ENCODE measurements at regions of chr17 and their contacts with region 1.

Region 1: GRCh38 chr17:55527540-55528118 is 16.4 kb upstream of the SMIM36 start:
- DNase-seq: no peak
- H3K4me3 Mint-ChIP-seq: no peak overlapping the region
- H3K27ac Mint-ChIP-seq: no peak overlapping the region
- H3K4me1 Mint-ChIP-seq: peaks cover 5% of the 10 kb centered on the region
- H3K27me3 Mint-ChIP-seq: peaks cover 20% of the 10 kb centered on the region

Region 2: GRCh38 chr17:55601874-55602364 is 74.3 kb after region 1 on chr17:
- intact Hi-C with region 1: loop called (anchors 1 kb)
- DNase-seq: peak; percentile 75
- H3K4me3 Mint-ChIP-seq: no peak overlapping the region
- H3K27ac Mint-ChIP-seq: no peak overlapping the region
- H3K4me1 Mint-ChIP-seq: no peaks in the 10 kb centered on the region
- H3K27me3 Mint-ChIP-seq: peaks cover 3% of the 10 kb centered on the region

Region 3: DNA sequence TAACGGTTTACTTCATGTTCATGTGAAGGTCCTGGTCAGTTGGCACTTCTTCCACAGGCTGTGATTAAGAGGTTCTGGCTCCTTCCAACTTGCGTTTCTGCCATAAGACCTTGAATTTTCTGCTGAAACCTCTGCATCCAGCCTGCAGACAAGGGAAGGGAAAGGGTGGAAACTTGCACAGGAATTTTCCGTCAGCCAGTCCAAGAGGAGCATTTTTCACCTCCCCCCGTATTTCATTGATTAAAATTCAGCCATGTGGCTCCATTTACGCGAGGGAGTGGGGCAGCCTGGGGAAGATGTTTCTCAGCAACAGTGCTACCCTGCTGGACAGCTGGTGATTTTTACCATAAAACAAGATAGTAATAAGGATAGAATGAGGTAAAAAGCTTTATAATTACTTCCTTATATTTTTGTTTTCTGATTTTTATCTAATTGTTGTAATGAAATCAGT is 85.1 kb after region 1 on chr17:
- intact Hi-C with region 1: no loop called
- DNase-seq: no peak
- H3K4me3 Mint-ChIP-seq: no peak overlapping the region
- H3K27ac Mint-ChIP-seq: no peak overlapping the region
- H3K4me1 Mint-ChIP-seq: no peaks in the 10 kb centered on the region
- H3K27me3 Mint-ChIP-seq: peaks cover 12% of the 10 kb centered on the region

Region 4: DNA sequence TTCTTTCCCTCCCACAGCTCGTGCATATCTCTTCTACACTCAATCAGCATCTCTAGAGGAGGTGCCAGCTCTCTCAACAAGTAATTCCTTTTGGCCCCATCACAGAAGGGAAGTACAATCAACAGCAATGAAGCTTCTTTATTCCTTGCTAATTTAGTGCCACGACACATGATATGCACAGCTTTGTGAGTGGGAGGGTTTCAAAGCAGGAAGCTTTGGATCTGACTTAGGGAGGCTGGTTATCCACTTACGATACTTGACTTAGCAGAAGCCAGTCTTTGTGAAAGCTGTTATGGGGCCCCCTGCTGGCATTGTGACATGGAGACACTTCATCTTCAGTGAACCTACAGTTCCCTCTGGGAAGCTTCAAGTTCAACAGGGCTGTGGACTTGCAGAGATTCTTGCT is 114.0 kb after region 1 on chr17:
- intact Hi-C with region 1: loop called (anchors 1 kb)
- DNase-seq: peak; percentile 70
- H3K4me3 Mint-ChIP-seq: no peak overlapping the region
- H3K27ac Mint-ChIP-seq: no peak overlapping the region
- H3K4me1 Mint-ChIP-seq: no peaks in the 10 kb centered on the region
- H3K27me3 Mint-ChIP-seq: peaks cover 4% of the 10 kb centered on the region

Region 5: GRCh38 chr17:55717898-55718735 is 190.5 kb after region 1 on chr17:
- intact Hi-C with region 1: loop called (anchors 1 kb)
- DNase-seq: peak; percentile 87
- H3K4me3 Mint-ChIP-seq: no peak overlapping the region
- H3K27ac Mint-ChIP-seq: no peak overlapping the region
- H3K4me1 Mint-ChIP-seq: no peaks in the 10 kb centered on the region
- H3K27me3 Mint-ChIP-seq: peaks cover 23% of the 10 kb centered on the region

Region 6: GRCh38 chr17:55735731-55736405 is 208.2 kb after region 1 on chr17:
- intact Hi-C with region 1: loop called (anchors 1 kb)
- DNase-seq: peak; percentile 81
- H3K4me3 Mint-ChIP-seq: no peak overlapping the region
- H3K27ac Mint-ChIP-seq: no peak overlapping the region
- H3K4me1 Mint-ChIP-seq: peaks cover 18% of the 10 kb centered on the region
- H3K27me3 Mint-ChIP-seq: peaks cover 31% of the 10 kb centered on the region

Region 7: DNA sequence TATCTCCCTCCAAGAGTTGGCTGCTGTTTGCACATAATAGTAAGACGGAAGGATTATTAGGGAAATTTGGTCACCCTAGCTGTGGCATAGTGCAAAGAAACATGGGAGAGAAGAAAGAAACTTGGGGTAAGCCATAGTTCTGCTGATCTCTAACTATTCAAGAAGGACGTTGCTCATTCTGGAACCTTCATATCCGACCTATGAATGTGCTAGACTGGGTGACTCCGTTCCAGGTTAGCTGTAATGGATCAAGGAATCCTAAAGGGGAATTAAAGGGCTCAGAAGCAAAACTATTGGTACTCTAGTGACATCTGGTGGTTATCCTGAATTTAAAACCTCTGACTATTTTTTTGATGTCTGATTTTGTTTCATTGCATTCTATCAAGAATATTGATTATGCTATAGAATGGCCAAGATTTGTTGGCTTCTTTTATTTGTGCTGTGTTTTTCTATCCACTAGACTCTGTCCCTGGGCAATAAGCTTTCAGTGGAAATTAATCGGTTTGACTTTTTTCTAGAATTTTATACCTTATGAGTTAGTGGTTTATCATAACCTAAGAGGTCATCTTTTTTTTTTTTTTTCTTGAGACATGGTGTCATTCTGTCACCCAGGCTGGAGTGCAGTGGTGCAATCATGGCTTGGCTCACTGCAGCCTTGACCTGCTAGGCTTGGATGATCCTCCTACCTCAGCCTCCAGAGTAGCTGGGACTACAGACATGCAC is 242.7 kb after region 1 on chr17:
- intact Hi-C with region 1: loop called (anchors 2 kb)
- DNase-seq: no peak
- H3K4me3 Mint-ChIP-seq: no peak overlapping the region
- H3K27ac Mint-ChIP-seq: no peak overlapping the region
- H3K4me1 Mint-ChIP-seq: no peaks in the 10 kb centered on the region
- H3K27me3 Mint-ChIP-seq: no peaks in the 10 kb centered on the region

Region 8: DNA sequence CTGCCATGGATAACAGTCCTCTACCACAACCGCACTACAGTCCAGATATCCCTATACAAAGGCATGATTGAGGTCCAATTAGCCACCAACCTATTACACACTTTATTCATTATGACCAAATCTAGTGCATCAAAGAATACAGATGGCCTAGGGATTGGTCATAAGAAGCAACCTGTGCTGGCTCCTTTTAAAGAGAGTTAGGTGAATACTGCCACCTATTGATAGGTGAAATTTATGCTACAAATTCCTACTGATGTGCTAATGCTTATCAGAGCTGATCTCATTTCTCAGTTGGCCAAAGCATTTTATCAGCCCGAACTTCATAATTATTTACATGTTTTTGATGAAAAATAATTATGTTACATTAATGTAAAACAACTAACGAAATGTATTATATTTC is 791.9 kb after region 1 on chr17:
- intact Hi-C with region 1: loop called (anchors 5 kb)
- DNase-seq: no peak
- H3K4me3 Mint-ChIP-seq: no peak overlapping the region
- H3K27ac Mint-ChIP-seq: no peak overlapping the region
- H3K4me1 Mint-ChIP-seq: no peaks in the 10 kb centered on the region
- H3K27me3 Mint-ChIP-seq: peaks cover 14% of the 10 kb centered on the region

Measured in activated CD4-positive, alpha-beta T cell treated with anti-CD3 and anti-CD28 coated beads, Interleukin-2, amount 10 ng/mL, durations not matched to agents 24 days and 14 days (primary cell).